CD8-positive, alpha-beta T cell (primary cell): ENCODE measurements at regions of chr12 and their contacts with region 1.

Region 1: GRCh38 chr12:31406345-31406744 is 80.4 kb upstream of the SINHCAF start:
- DNase-seq: no peak
- ATAC-seq: no peak
- H3K4me3 ChIP-seq: no peak overlapping the region
- H3K4me3 Mint-ChIP-seq: no peak overlapping the region
- H3K27ac ChIP-seq: no peak overlapping the region
- H3K27ac Mint-ChIP-seq: no peak overlapping the region
- H3K4me1 ChIP-seq: no peaks in the 10 kb centered on the region
- H3K4me1 Mint-ChIP-seq: peaks cover 2% of the 10 kb centered on the region
- H3K27me3 ChIP-seq: no peaks in the 10 kb centered on the region
- H3K27me3 Mint-ChIP-seq: no peaks in the 10 kb centered on the region
- CTCF ChIP-seq: no peak

Region 2: DNA sequence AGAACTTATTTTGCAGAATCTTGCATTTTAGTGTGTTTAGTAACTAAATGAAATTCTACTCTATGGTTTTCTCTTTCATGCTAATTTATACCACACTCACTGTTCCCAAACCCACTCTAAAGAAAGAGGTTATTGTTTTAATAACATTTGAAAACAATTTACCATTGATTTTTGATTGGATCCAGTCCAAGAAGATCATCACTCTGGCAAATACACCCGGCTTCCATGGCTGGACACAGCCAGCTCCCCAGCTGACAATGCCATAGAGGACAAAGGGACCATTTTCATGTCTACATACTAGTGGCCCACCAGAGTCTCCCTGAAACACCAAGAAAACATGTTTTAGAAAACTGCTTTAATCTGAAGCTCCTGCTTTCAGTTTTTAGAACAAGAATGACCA is 1951.3 kb before region 1 on chr12:
- CTCF ChIA-PET with region 1: no interaction called
- POLR2A ChIA-PET with region 1: no interaction called
- intact Hi-C with region 1: no loop called
- DNase-seq: no peak
- ATAC-seq: no peak
- H3K4me3 ChIP-seq: no peak overlapping the region
- H3K4me3 Mint-ChIP-seq: no peak overlapping the region
- H3K27ac ChIP-seq: no peak overlapping the region
- H3K27ac Mint-ChIP-seq: no peak overlapping the region
- H3K4me1 ChIP-seq: no peaks in the 10 kb centered on the region
- H3K4me1 Mint-ChIP-seq: no peaks in the 10 kb centered on the region
- H3K27me3 ChIP-seq: no peaks in the 10 kb centered on the region
- H3K27me3 Mint-ChIP-seq: peaks cover 15% of the 10 kb centered on the region
- CTCF ChIP-seq: no peak

Region 3: GRCh38 chr12:31629756-31630732 is 223.7 kb after region 1 on chr12:
- CTCF ChIA-PET with region 1: interaction called, 11 read pairs
- POLR2A ChIA-PET with region 1: no interaction called
- intact Hi-C with region 1: no loop called
- DNase-seq: no peak
- ATAC-seq: no peak
- H3K4me3 ChIP-seq: no peak overlapping the region
- H3K4me3 Mint-ChIP-seq: no peak overlapping the region
- H3K27ac ChIP-seq: no peak overlapping the region
- H3K27ac Mint-ChIP-seq: no peak overlapping the region
- H3K4me1 ChIP-seq: no peaks in the 10 kb centered on the region
- H3K4me1 Mint-ChIP-seq: no peaks in the 10 kb centered on the region
- H3K27me3 ChIP-seq: no peaks in the 10 kb centered on the region
- H3K27me3 Mint-ChIP-seq: peaks cover 2% of the 10 kb centered on the region
- CTCF ChIP-seq: no peak

Region 4: GRCh38 chr12:31644536-31644935 is 238.2 kb after region 1 on chr12:
- CTCF ChIA-PET with region 1: interaction called, 11 read pairs
- POLR2A ChIA-PET with region 1: no interaction called
- intact Hi-C with region 1: no loop called
- DNase-seq: no peak
- ATAC-seq: no peak
- H3K4me3 ChIP-seq: no peak overlapping the region
- H3K4me3 Mint-ChIP-seq: no peak overlapping the region
- H3K27ac ChIP-seq: no peak overlapping the region
- H3K27ac Mint-ChIP-seq: no peak overlapping the region
- H3K4me1 ChIP-seq: no peaks in the 10 kb centered on the region
- H3K4me1 Mint-ChIP-seq: no peaks in the 10 kb centered on the region
- H3K27me3 ChIP-seq: no peaks in the 10 kb centered on the region
- H3K27me3 Mint-ChIP-seq: no peaks in the 10 kb centered on the region
- CTCF ChIP-seq: no peak

Region 5: DNA sequence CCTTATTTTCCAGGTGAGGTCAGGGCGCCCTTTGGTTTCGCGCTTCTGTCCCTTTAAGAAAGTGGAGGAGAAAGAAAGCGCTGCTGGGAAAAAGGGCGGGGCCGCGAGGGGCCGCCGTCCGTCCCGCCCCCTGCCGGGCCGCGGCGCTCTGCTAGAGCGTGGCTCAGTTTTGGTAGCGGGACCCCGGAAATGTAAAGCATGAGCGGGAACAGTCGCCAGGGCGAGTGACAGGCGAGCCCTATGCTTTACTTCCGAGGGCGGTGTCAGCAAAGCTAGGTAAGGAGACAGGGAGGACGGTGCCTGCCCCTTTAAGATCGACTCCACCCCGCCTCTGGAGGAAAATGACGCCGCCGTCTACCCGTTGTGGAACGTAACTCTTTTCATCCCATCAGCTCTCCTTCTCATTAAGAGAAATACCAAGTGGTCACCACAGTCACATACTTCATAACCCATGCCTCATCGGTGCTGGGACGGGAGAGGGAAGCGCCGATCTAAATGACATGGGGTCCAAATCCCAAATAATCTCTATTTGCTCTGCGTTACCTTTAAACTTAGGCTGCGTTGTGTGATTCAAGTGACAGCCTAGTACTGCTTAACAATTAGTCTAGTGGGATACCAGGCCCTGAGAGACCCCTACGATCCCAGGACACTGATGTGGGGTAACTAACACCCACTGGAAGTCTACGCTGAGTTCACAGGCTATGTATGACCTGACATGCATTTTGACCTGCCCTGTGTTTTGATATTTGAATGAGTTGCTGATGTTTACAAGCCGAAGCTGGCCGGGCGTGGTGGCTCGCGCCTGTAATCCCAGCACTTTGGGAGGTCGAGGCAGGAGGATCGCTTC is 253.0 kb after region 1 on chr12 and contains the start of gene ETFBKMT:
- CTCF ChIA-PET with region 1: interaction called, 11 read pairs
- POLR2A ChIA-PET with region 1: no interaction called
- intact Hi-C with region 1: no loop called
- DNase-seq: peak; percentile 84 to 97 (median 92)
- ATAC-seq: peak; percentile 99
- H3K4me3 ChIP-seq: peak within 1 kb of the TSS; percentile 82 to 87
- H3K4me3 Mint-ChIP-seq: peak within 1 kb of the TSS; percentile 98
- H3K27ac ChIP-seq: peak within 1 kb of the TSS; percentile 89 to 92
- H3K27ac Mint-ChIP-seq: peak within 1 kb of the TSS; percentile 100
- H3K4me1 ChIP-seq: peaks cover 11% of the 10 kb centered on the region
- H3K4me1 Mint-ChIP-seq: peaks cover 14% of the 10 kb centered on the region
- H3K27me3 ChIP-seq: no peaks in the 10 kb centered on the region
- H3K27me3 Mint-ChIP-seq: no peaks in the 10 kb centered on the region
- CTCF ChIP-seq: peak; percentile 22
- total RNA-seq, gene ETFBKMT: 0.41 to 1.0 TPM

Region 6: DNA sequence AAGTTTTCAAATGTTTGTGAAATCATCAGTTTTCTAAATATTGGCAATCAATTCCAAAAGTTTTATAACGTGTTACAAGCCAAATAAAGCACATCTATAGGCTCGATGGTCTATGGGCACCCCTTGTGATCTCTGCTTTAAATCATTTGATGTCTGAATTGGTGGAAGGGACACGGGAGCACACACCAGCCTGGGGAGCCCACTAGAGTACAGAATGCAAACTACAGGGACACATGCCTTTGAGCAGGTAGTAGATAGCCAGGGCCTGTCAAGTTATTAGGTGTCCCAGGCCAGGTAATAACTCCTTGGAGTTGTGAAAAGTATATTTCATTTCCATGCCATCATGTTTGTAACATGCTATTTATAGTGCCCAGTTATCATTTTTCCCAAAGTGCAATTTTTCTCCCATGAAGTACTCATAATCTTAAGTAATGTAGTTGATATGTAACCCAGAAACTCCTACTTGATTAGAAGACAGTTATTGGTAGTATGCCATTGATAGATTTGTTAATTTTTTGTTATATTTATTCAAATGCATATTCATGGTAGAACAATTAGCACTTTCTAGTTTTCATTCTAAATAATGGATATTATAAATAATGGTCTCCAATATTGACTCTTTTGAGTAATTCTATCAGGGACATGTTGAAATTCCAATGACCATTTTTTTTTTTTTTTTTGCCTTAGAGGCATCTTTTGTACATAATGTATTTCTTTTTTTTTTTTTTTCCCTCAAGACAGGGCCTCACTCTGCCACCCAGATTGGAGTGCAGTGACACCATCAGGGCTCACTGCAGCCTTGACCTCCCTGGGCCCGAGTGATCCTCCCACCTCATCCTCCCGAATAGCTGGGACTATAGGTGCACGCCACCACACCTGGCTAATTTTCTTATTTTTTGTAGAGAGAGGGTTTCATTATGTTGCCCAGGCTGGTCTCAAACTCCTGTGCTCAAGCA is 896.2 kb after region 1 on chr12:
- CTCF ChIA-PET with region 1: interaction called, 5 read pairs
- POLR2A ChIA-PET with region 1: no interaction called
- intact Hi-C with region 1: loop called in 1 of 2 experiments (anchors 2 kb)
- DNase-seq: peak in 1 of 9 experiments; percentile 35
- ATAC-seq: no peak
- H3K4me3 ChIP-seq: no peak overlapping the region
- H3K4me3 Mint-ChIP-seq: no peak overlapping the region
- H3K27ac ChIP-seq: no peak overlapping the region
- H3K27ac Mint-ChIP-seq: no peak overlapping the region
- H3K4me1 ChIP-seq: no peaks in the 10 kb centered on the region
- H3K4me1 Mint-ChIP-seq: peaks cover 5% of the 10 kb centered on the region
- H3K27me3 ChIP-seq: no peaks in the 10 kb centered on the region
- H3K27me3 Mint-ChIP-seq: no peaks in the 10 kb centered on the region
- CTCF ChIP-seq: peak; percentile 21

Region 7: GRCh38 chr12:32312049-32312670 is 905.8 kb after region 1 on chr12:
- CTCF ChIA-PET with region 1: interaction called, 6 read pairs
- POLR2A ChIA-PET with region 1: no interaction called
- intact Hi-C with region 1: loop called (anchors 1 to 2 kb)
- DNase-seq: peak in 2 of 9 experiments; percentile 58 to 72
- ATAC-seq: peak; percentile 44
- H3K4me3 ChIP-seq: no peak overlapping the region
- H3K4me3 Mint-ChIP-seq: no peak overlapping the region
- H3K27ac ChIP-seq: no peak overlapping the region
- H3K27ac Mint-ChIP-seq: no peak overlapping the region
- H3K4me1 ChIP-seq: no peaks in the 10 kb centered on the region
- H3K4me1 Mint-ChIP-seq: peaks cover 3% of the 10 kb centered on the region
- H3K27me3 ChIP-seq: no peaks in the 10 kb centered on the region
- H3K27me3 Mint-ChIP-seq: no peaks in the 10 kb centered on the region
- CTCF ChIP-seq: peak; percentile 35

Region 8: DNA sequence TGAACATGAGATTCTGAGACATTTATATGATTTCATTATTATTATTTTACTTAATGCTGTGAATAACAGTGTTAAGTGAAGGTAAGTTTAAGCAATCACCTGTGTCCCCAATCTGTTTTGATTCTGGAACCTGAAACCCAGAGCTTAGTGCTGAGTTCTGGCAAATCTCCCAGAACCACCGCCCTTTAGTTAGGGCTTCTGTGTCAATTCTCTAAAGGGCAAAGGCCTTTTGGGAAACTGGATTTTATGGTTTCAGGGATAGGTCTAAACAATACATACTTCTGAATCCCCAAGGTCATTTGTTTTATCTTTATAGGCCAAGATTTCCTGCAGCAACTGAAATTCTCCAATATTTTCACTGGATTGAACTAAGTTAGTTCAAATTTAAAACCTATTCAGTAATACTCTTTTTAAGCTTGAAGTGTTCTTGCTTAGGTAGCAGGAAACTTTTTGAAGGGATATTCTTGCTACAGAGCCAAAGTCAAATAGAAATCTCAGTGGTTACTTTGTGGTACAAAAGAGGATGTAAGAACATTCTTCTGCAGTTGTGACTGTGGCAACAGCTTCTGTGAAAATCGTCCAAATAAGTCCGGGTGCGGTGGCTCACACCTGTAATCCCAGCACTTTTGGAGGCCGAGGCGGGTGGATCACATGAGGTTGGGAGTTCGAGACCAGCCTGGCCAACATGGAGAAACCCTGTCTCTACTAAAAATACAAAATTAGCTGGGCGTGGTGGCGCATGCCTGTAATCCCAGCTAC is 1500.2 kb after region 1 on chr12:
- CTCF ChIA-PET with region 1: no interaction called
- POLR2A ChIA-PET with region 1: no interaction called
- intact Hi-C with region 1: no loop called
- DNase-seq: no peak
- ATAC-seq: no peak
- H3K4me3 ChIP-seq: no peak overlapping the region
- H3K4me3 Mint-ChIP-seq: no peak overlapping the region
- H3K27ac ChIP-seq: no peak overlapping the region
- H3K27ac Mint-ChIP-seq: no peak overlapping the region
- H3K4me1 ChIP-seq: no peaks in the 10 kb centered on the region
- H3K4me1 Mint-ChIP-seq: no peaks in the 10 kb centered on the region
- H3K27me3 ChIP-seq: no peaks in the 10 kb centered on the region
- H3K27me3 Mint-ChIP-seq: peaks cover 19% of the 10 kb centered on the region
- CTCF ChIP-seq: no peak